Activated CD8-positive, alpha-beta memory T cell treated with anti-CD3 and anti-CD28 coated beads, Interleukin-2, amount 10 ng/mL, durations not matched to agents 7 days and 5 days (primary cell): ENCODE measurements at regions of chr12 and their contacts with region 1.

Region 1: GRCh38 chr12:14995583-14996425 is 23.0 kb downstream of the PDE6H start:
- DNase-seq: no peak
- ATAC-seq: peak; percentile 79
- H3K4me3 Mint-ChIP-seq: no peak overlapping the region
- H3K27ac Mint-ChIP-seq: peak overlapping the region; percentile 31
- H3K4me1 Mint-ChIP-seq: peaks cover 20% of the 10 kb centered on the region
- H3K27me3 Mint-ChIP-seq: peaks cover 17% of the 10 kb centered on the region

Region 2: GRCh38 chr12:14340371-14340770 is 655.4 kb before region 1 on chr12:
- CTCF ChIA-PET with region 1: no interaction called
- DNase-seq: no peak
- ATAC-seq: no peak
- H3K4me3 Mint-ChIP-seq: no peak overlapping the region
- H3K27ac Mint-ChIP-seq: no peak overlapping the region
- H3K4me1 Mint-ChIP-seq: no peaks in the 10 kb centered on the region
- H3K27me3 Mint-ChIP-seq: no peaks in the 10 kb centered on the region

Region 3: DNA sequence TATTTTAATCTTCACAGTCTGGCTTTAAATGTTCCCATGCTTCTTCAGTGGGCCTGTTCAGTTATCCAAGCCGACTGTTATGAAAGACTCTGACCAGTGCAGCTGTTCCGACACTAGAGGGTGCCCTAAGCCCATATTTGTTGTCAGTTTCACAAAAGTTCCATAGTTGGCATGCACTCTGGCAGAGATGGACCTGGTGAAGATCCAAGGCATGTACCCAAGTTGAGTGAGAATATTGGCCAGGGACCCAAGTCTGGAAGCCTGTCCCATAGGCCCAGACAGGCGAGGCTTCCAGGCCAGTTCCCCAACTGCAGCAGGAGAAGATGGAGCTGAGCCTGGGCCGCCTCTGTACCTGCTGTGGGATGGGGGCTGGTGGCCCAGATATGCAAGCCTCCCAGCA is 272.0 kb before region 1 on chr12:
- CTCF ChIA-PET with region 1: interaction called, 12 read pairs
- DNase-seq: peak; percentile 65
- ATAC-seq: peak; percentile 64
- H3K4me3 Mint-ChIP-seq: no peak overlapping the region
- H3K27ac Mint-ChIP-seq: no peak overlapping the region
- H3K4me1 Mint-ChIP-seq: peaks cover 3% of the 10 kb centered on the region
- H3K27me3 Mint-ChIP-seq: peaks cover 16% of the 10 kb centered on the region

Region 4: GRCh38 chr12:14845350-14845750 is 150.5 kb before region 1 on chr12:
- CTCF ChIA-PET with region 1: interaction called, 62 read pairs
- DNase-seq: peak; percentile 52
- ATAC-seq: peak; percentile 65
- H3K4me3 Mint-ChIP-seq: no peak overlapping the region
- H3K27ac Mint-ChIP-seq: no peak overlapping the region
- H3K4me1 Mint-ChIP-seq: peaks cover 4% of the 10 kb centered on the region
- H3K27me3 Mint-ChIP-seq: no peaks in the 10 kb centered on the region

Region 5: DNA sequence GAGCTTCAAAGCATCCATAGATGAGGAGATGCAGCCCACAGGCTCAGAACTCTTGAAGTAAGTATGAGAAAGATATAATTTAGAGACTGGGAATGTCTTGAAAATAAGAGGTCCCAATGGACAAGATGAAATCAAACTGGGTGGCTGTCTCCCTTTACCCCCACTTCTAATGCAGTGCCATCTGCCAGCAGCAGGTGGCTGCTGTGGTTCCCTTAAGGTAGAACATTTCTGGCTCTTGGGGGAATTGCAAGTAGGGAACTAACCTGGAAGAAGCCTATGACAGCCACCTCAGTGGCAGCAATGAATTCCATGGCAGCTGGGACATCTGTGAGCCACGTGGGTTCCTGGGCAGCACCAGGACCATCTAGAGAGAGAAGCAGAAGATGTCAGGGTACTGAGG is 58.1 kb before region 1 on chr12:
- CTCF ChIA-PET with region 1: interaction called, 15 read pairs
- DNase-seq: no peak
- ATAC-seq: peak; percentile 63
- H3K4me3 Mint-ChIP-seq: no peak overlapping the region
- H3K27ac Mint-ChIP-seq: peak overlapping the region; percentile 24
- H3K4me1 Mint-ChIP-seq: peaks cover 10% of the 10 kb centered on the region
- H3K27me3 Mint-ChIP-seq: no peaks in the 10 kb centered on the region